WTC11 (cell line): ENCODE measurements at regions of chr9 and their contacts with region 1.

Region 1: GRCh38 chr9:133023117-133023890 is 7.5 kb upstream of the GTF3C5 start:
- DNase-seq: peak; percentile 47
- ATAC-seq: peak; percentile 18; the same call in 1 of the 2 replicates
- H3K4me3 Mint-ChIP-seq: no peak overlapping the region
- H3K27ac Mint-ChIP-seq: no peak overlapping the region
- H3K4me1 Mint-ChIP-seq: peaks cover 13% of the 10 kb centered on the region
- H3K27me3 Mint-ChIP-seq: peaks cover 27% of the 10 kb centered on the region
- CTCF ChIP-seq: no peak

Region 2: GRCh38 chr9:132978451-132979131 is 44.7 kb before region 1 on chr9 and contains the start of gene GFI1B:
- CTCF ChIA-PET with region 1: interaction called, 43 read pairs
- POLR2A ChIA-PET with region 1: no interaction called
- DNase-seq: peak; percentile 57
- ATAC-seq: peak; percentile 48
- H3K4me3 Mint-ChIP-seq: peak within 1 kb of the TSS; percentile 51
- H3K27ac Mint-ChIP-seq: no peak within 1 kb of the TSS
- H3K4me1 Mint-ChIP-seq: peaks cover 19% of the 10 kb centered on the region
- H3K27me3 Mint-ChIP-seq: peaks cover 48% of the 10 kb centered on the region
- CTCF ChIP-seq: no peak
- total RNA-seq, gene GFI1B: 0.41 to 0.78 TPM (median 0.77 TPM) in 3 replicates

Region 3: DNA sequence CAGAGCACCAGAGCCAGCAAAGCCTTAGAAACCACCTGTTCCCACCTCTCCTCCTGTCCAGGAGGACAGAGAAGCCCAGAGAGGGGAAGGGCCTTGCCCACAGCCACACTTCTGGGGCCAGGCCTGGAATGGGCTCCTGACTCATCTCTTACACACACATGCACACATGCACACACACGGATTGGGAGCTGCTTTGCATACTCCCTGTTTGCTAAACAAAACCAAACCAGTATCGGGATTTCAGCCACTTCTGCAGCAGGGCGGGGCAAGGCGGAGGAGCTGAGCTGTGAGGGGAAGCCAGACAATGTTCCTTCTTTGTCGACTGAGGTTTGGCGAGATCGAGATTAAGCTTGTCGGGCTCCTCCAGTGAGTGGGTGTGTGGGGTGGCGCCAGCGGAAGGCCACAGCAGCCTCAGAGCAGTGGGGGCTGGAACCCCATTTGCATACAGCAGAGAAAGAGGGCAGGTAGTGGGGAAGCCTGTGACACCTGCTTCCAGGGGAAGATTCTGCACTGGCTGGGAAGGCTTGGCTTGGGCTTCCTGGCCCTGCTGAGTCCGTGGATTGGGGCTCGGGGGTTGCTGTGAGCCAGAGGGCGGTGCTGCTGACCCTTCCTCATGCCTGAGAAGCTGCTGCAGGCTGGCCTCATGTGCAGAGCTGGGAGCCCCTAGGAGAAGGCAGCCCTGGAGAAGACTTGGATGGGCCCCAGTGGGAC is 28.7 kb before region 1 on chr9:
- CTCF ChIA-PET with region 1: interaction called, 25 read pairs
- POLR2A ChIA-PET with region 1: no interaction called
- DNase-seq: no peak
- ATAC-seq: peak; percentile 31
- H3K4me3 Mint-ChIP-seq: no peak overlapping the region
- H3K27ac Mint-ChIP-seq: no peak overlapping the region
- H3K4me1 Mint-ChIP-seq: peaks cover 37% of the 10 kb centered on the region
- H3K27me3 Mint-ChIP-seq: peaks cover 4% of the 10 kb centered on the region; the same call in 1 of the 2 replicates
- CTCF ChIP-seq: no peak

Region 4: GRCh38 chr9:133004091-133004998 is 19.0 kb before region 1 on chr9:
- CTCF ChIA-PET with region 1: interaction called, 60 read pairs
- POLR2A ChIA-PET with region 1: no interaction called
- DNase-seq: peak; percentile 6
- ATAC-seq: no peak
- H3K4me3 Mint-ChIP-seq: no peak overlapping the region
- H3K27ac Mint-ChIP-seq: no peak overlapping the region
- H3K4me1 Mint-ChIP-seq: peaks cover 38% of the 10 kb centered on the region
- H3K27me3 Mint-ChIP-seq: peaks cover 92% of the 10 kb centered on the region
- CTCF ChIP-seq: no peak

Region 5: GRCh38 chr9:133009906-133010582 is 13.3 kb before region 1 on chr9:
- CTCF ChIA-PET with region 1: interaction called, 60 read pairs
- POLR2A ChIA-PET with region 1: no interaction called
- DNase-seq: no peak
- ATAC-seq: no peak
- H3K4me3 Mint-ChIP-seq: no peak overlapping the region
- H3K27ac Mint-ChIP-seq: no peak overlapping the region
- H3K4me1 Mint-ChIP-seq: peaks cover 4% of the 10 kb centered on the region
- H3K27me3 Mint-ChIP-seq: peaks cover 72% of the 10 kb centered on the region
- CTCF ChIP-seq: no peak

Region 6: GRCh38 chr9:133149126-133150107 is 126.1 kb after region 1 on chr9:
- CTCF ChIA-PET with region 1: interaction called, 28 read pairs
- POLR2A ChIA-PET with region 1: no interaction called
- DNase-seq: peak; percentile 85
- ATAC-seq: peak; percentile 54
- H3K4me3 Mint-ChIP-seq: peak overlapping the region; percentile 61
- H3K27ac Mint-ChIP-seq: no peak overlapping the region
- H3K4me1 Mint-ChIP-seq: peaks cover 18% of the 10 kb centered on the region
- H3K27me3 Mint-ChIP-seq: peaks cover 10% of the 10 kb centered on the region
- CTCF ChIP-seq: no peak

Region 7: DNA sequence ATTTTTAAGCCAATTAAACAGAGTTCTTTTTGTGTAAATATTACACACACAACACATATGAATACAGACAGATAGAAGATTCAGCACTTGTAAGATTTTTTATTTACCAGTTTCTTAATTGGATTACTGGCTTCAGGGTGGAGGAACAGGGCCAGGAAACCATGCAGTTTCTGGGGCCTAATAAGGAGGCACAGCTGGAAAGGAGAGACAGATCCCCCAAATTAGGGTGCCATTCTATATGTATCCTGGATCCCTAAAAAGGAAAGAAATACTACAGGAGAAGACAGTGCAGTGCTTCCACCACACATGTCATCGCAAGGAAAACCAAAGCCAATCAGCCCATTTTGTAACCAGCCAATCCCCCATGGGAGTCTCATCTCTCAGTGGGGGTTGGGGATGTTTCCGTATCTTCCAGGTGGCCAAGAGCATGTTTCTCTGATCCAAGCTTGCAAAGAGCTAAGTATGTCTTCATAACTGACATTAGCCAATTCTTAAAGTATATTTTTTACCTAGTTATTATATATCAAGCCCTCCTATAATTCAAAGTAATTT is 267.5 kb after region 1 on chr9:
- CTCF ChIA-PET with region 1: no interaction called
- POLR2A ChIA-PET with region 1: no interaction called
- DNase-seq: no peak
- ATAC-seq: no peak
- H3K4me3 Mint-ChIP-seq: no peak overlapping the region
- H3K27ac Mint-ChIP-seq: no peak overlapping the region
- H3K4me1 Mint-ChIP-seq: no peaks in the 10 kb centered on the region
- H3K27me3 Mint-ChIP-seq: peaks cover 66% of the 10 kb centered on the region
- CTCF ChIP-seq: no peak